Heart right ventricle (tissue), 16 donors: ENCODE measurements at regions of chr3 and their contacts with region 1.

Region 1: GRCh38 chr3:44761424-44762169 is at the starts of genes KIAA1143 and KIF15:
- DNase-seq: peak; percentile 95 to 97
- ATAC-seq: peak; percentile 99 to 100 (median 100)
- H3K4me3 ChIP-seq: peak within 1 kb of the TSS; percentile 56 to 94 (median 86)
- H3K27ac ChIP-seq: peak within 1 kb of the TSS in 9 of 10 donors; percentile 26 to 92 (median 75)
- H3K4me1 ChIP-seq: peaks cover 0 to 21% (median 12%) of the 10 kb centered on the region in 9 donors
- H3K27me3 ChIP-seq: no peaks in the 10 kb centered on the region
- CTCF ChIP-seq: peak in 3 of 9 donors; percentile 23 to 30 (median 29)
- total RNA-seq, gene KIAA1143: 27.7 to 36.6 (median 34.8) TPM
- total RNA-seq, gene KIF15: 0.17 to 1.9 (median 0.50) TPM

Region 2: GRCh38 chr3:43231276-43232000 is 1530.2 kb before region 1 on chr3:
- intact Hi-C with region 1: loop called in 1 of 10 experiments (anchors 5 kb)
- DNase-seq: no peak
- ATAC-seq: peak in 2 of 8 donors; percentile 31 to 42
- H3K4me3 ChIP-seq: no peak overlapping the region
- H3K27ac ChIP-seq: peak overlapping the region in 2 of 10 donors; percentile 6 to 57
- H3K4me1 ChIP-seq: peaks cover 0 to 32% (median 10%) of the 10 kb centered on the region in 9 donors
- H3K27me3 ChIP-seq: no peaks in the 10 kb centered on the region
- CTCF ChIP-seq: no peak

Region 3: DNA sequence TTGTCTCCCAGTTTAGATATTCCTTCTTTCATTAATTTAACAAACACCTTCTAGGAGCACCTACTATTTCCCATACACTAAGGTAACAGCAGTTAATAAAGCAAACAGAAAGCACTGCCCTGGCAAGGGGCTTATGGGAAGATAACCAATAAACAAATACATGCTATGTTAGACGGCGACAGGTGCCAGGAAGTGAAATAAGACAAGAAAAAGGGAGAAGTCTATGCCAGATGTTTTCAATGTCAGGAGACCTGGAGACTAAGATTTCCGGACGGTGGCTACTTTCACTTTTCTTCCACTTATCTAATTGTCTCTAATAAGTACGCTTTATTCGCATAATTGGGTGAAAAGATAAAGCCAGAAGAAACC is 251.6 kb before region 1 on chr3:
- intact Hi-C with region 1: loop called in 1 of 10 experiments (anchors 10 kb)
- DNase-seq: no peak
- ATAC-seq: no peak
- H3K4me3 ChIP-seq: peak overlapping the region; percentile 73 to 98 (median 87)
- H3K27ac ChIP-seq: peak overlapping the region; percentile 41 to 96 (median 92)
- H3K4me1 ChIP-seq: peaks cover 4 to 23% (median 18%) of the 10 kb centered on the region in 9 donors
- H3K27me3 ChIP-seq: no peaks in the 10 kb centered on the region
- CTCF ChIP-seq: no peak

Region 4: GRCh38 chr3:44712455-44713075 is 49.0 kb before region 1 on chr3 and contains the start of gene ZNF502:
- intact Hi-C with region 1: loop called in 2 of 10 experiments (anchors 1 to 5 kb)
- DNase-seq: peak; percentile 87 to 91
- ATAC-seq: peak; percentile 98 to 99 (median 98)
- H3K4me3 ChIP-seq: peak within 1 kb of the TSS; percentile 67 to 97 (median 83)
- H3K27ac ChIP-seq: peak within 1 kb of the TSS in 9 of 10 donors; percentile 41 to 82 (median 73)
- H3K4me1 ChIP-seq: peaks cover 0 to 12% (median 6%) of the 10 kb centered on the region in 9 donors
- H3K27me3 ChIP-seq: peaks cover 0 to 21% (median 5%) of the 10 kb centered on the region in 7 donors
- CTCF ChIP-seq: peak in 8 of 9 donors; percentile 10 to 58 (median 44)
- total RNA-seq, gene ZNF502: 2.8 to 4.6 (median 3.5) TPM

Region 5: DNA sequence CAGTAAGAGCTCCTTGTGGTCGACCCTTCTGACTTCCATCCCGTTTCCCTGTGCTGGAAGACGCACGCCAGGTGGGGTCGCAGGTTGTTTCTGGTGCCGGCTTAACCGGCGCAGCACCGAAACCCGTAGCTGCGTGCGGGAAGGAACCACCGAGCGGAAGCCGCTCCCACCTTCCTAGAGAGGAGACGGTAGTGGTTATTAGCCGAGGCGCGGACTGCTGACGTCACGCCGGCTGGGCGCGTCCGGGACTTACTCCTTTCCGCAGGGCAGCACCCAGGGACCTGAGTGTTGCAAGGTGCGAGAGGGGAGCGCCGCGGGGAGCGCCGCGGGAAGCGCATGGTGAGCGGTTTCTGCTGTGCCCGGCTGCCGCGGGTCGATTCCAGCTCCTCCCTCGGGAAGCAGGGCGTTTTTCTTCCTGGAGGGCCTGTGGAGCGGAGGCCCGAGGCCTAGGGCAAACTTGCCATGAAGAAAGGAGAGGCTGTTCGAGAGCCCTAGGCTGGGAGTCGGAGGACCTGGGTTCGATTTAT is 32.1 kb before region 1 on chr3 and contains the start of gene ZNF501:
- intact Hi-C with region 1: loop called in 1 of 10 experiments (anchors 1 kb)
- DNase-seq: peak; percentile 93 to 96
- ATAC-seq: peak; percentile 99 to 100 (median 100)
- H3K4me3 ChIP-seq: peak within 1 kb of the TSS; percentile 61 to 91 (median 80)
- H3K27ac ChIP-seq: peak within 1 kb of the TSS in 9 of 10 donors; percentile 51 to 79 (median 63)
- H3K4me1 ChIP-seq: peaks cover 0 to 11% (median 3%) of the 10 kb centered on the region in 9 donors
- H3K27me3 ChIP-seq: no peaks in the 10 kb centered on the region
- CTCF ChIP-seq: no peak
- total RNA-seq, gene ZNF501: 3.0 to 8.7 (median 4.8) TPM

Region 6: GRCh38 chr3:44833394-44833793 is 71.8 kb after region 1 on chr3:
- intact Hi-C with region 1: no loop called
- DNase-seq: no peak
- ATAC-seq: peak in 3 of 8 donors; percentile 39 to 74 (median 67)
- H3K4me3 ChIP-seq: peak overlapping the region in 6 of 10 donors; percentile 9 to 30 (median 23)
- H3K27ac ChIP-seq: peak overlapping the region in 5 of 10 donors; percentile 16 to 42 (median 38)
- H3K4me1 ChIP-seq: peaks cover 0 to 7% (median 0%) of the 10 kb centered on the region in 9 donors
- H3K27me3 ChIP-seq: no peaks in the 10 kb centered on the region
- CTCF ChIP-seq: no peak

Region 7: GRCh38 chr3:44861412-44862220 is 100.0 kb after region 1 on chr3 and contains the start of gene TMEM42:
- intact Hi-C with region 1: loop called in 6 of 10 experiments (anchors 1 to 10 kb)
- DNase-seq: peak; percentile 88 to 94
- ATAC-seq: peak; percentile 98 to 100 (median 99)
- H3K4me3 ChIP-seq: peak within 1 kb of the TSS; percentile 30 to 84 (median 73)
- H3K27ac ChIP-seq: peak within 1 kb of the TSS; percentile 61 to 97 (median 94)
- H3K4me1 ChIP-seq: peaks cover 0 to 16% (median 11%) of the 10 kb centered on the region in 9 donors
- H3K27me3 ChIP-seq: no peaks in the 10 kb centered on the region
- CTCF ChIP-seq: peak in 8 of 9 donors; percentile 11 to 60 (median 49)
- total RNA-seq, gene TMEM42: 8.4 to 13.1 (median 11.2) TPM